Common myeloid progenitor, CD34-positive (primary cell): ENCODE measurements at regions of chr1 and their contacts with region 1.

Region 1: GRCh38 chr1:34742667-34743270 is 12.1 kb upstream of the GJB5 start:
- DNase-seq: peak; percentile 60 to 77 (median 70)
- H3K4me3 ChIP-seq: no peak overlapping the region
- H3K27ac ChIP-seq: no peak overlapping the region
- H3K4me1 ChIP-seq: no peaks in the 10 kb centered on the region
- H3K27me3 ChIP-seq: peaks cover 0 to 6% (median 0%) of the 10 kb centered on the region in 5 experiments

Region 2: DNA sequence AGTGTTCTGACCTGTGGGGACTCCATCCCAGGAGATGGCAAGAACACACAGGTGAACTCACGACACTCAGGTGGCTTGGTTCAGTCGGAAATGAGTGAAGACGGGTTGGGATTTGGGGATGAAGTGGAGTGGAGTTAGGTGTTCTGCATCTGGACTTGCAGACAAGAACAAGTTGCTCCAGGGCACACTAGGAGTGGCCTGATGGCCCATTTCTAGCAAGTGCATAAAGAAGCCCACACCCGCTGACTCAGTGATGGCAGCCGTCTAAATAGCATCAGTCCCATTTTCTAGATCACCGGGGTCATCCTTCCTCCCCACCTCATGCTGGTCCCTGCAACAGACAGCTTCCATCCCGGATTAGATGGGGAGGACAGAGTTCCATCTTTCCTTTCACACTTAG is 287.6 kb before region 1 on chr1:
- CTCF ChIA-PET with region 1: interaction called, 29 read pairs
- POLR2A ChIA-PET with region 1: no interaction called
- DNase-seq: no peak
- H3K4me3 ChIP-seq: no peak overlapping the region
- H3K27ac ChIP-seq: no peak overlapping the region
- H3K4me1 ChIP-seq: no peaks in the 10 kb centered on the region
- H3K27me3 ChIP-seq: peaks cover 0 to 1% (median 0%) of the 10 kb centered on the region in 5 experiments

Region 3: GRCh38 chr1:34460193-34460592 is 282.6 kb before region 1 on chr1:
- CTCF ChIA-PET with region 1: interaction called, 29 read pairs
- POLR2A ChIA-PET with region 1: no interaction called
- DNase-seq: peak; percentile 42 to 66 (median 55)
- H3K4me3 ChIP-seq: no peak overlapping the region
- H3K27ac ChIP-seq: no peak overlapping the region
- H3K4me1 ChIP-seq: no peaks in the 10 kb centered on the region
- H3K27me3 ChIP-seq: no peaks in the 10 kb centered on the region

Region 4: DNA sequence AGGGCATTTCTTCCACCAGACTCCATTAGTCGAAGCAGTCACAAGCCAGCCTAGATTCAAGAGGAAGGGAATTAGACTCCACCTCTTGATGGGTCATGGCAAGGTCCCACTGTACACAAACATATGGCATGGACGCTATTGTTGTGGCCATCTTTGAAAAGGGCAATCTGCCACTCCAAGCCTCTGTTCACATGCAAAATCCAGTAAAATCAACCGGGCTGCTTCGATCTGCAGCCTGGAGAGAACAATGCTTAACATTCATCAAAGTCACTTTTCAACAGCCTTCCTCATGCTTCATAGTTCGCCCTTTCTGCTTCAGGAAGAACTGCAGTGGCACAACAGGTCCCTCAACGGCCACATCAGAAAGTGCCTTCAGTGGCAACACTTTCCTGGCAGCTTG is 15.9 kb before region 1 on chr1:
- CTCF ChIA-PET with region 1: interaction called, 11 read pairs
- POLR2A ChIA-PET with region 1: no interaction called
- DNase-seq: no peak
- H3K4me3 ChIP-seq: no peak overlapping the region
- H3K27ac ChIP-seq: no peak overlapping the region
- H3K4me1 ChIP-seq: no peaks in the 10 kb centered on the region
- H3K27me3 ChIP-seq: peaks cover 4 to 15% (median 7%) of the 10 kb centered on the region in 5 experiments

Region 5: DNA sequence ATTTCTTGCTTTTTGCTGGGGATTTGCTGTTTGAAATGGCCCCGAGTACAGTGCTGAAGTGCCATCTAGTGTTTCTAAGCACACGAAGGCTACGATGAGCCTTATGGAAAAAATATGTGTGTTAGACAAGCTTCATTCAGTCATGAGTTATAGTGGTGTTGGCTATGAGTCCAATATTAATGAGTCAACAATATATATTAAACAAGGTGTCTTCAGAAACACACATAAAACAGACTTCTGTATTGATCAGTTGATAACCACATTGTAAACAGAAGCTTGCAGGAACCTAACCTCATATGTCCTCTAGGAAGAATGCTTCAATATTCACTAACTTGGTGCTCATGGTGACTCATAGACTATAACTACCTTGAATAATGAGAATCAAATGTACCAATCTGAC is 10.4 kb after region 1 on chr1:
- CTCF ChIA-PET with region 1: interaction called, 16 read pairs
- POLR2A ChIA-PET with region 1: no interaction called
- DNase-seq: no peak
- H3K4me3 ChIP-seq: no peak overlapping the region
- H3K27ac ChIP-seq: no peak overlapping the region
- H3K4me1 ChIP-seq: no peaks in the 10 kb centered on the region
- H3K27me3 ChIP-seq: peaks cover 0 to 5% (median 0%) of the 10 kb centered on the region in 5 experiments